ENCODE measurements at regions of chr7 and their contacts with region 1.

Region 1: DNA sequence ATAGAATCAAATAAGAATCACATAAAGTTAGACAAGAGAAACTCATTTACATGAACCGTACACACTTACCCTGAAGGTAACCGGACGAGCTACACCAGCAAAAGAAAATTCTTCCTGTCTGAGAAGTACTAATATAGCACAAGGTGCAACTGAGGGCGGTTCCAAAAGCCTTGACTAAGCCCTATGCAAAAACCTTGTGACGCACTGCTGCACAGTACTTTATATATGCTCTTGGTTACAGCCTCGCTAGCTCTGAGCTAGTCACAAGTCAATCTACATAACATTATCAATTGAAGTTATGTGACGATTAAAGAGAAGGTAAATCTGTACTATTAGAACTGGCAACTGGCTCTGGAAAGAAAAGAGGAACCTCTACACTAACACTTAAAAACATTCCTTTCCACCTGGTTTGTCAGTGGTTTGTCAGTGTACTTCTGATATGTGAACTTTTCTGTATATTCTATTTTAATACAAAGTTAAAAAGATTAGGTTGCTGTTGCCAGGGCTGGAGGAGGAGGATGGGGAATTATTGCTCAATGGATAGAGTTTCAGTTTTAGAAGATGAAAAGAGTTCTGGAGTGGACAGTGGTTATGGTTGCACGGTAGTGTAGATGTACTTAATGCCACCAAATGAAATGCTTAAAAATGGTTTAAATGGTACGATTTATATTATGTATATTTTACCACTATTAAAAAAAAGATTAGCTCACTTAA is 21.6 kb downstream of the NT5C3A start:
- DNase-seq: peak in 2 of 4 experiments; percentile 35 to 68
- ATAC-seq: peak; percentile 85
- H3K4me3 ChIP-seq: no peak overlapping the region
- H3K27ac ChIP-seq: peak overlapping the region; percentile 7; the same call in 1 of the 3 replicates
- H3K4me1 ChIP-seq: peaks cover 8 to 20% of the 10 kb centered on the region in 2 experiments; a peak in 3 of 5 replicates
- H3K27me3 ChIP-seq: no peaks in the 10 kb centered on the region
- CTCF ChIP-seq: no peak
- EP300 ChIP-seq: no peak
- POLR2A ChIP-seq: no peak
- RAD21 ChIP-seq: no peak

Region 2: GRCh38 chr7:32694182-32694581 is 346.8 kb before region 1 on chr7:
- CTCF ChIA-PET with region 1: no interaction called
- POLR2A ChIA-PET with region 1: no interaction called
- in situ Hi-C with region 1: loop called (anchors 10 kb)
- intact Hi-C with region 1: no loop called
- DNase-seq: no peak
- ATAC-seq: no peak
- H3K4me3 ChIP-seq: no peak overlapping the region
- H3K27ac ChIP-seq: no peak overlapping the region
- H3K4me1 ChIP-seq: peaks cover 0 to 6% of the 10 kb centered on the region in 2 experiments; a peak in 1 of 5 replicates
- H3K27me3 ChIP-seq: no peaks in the 10 kb centered on the region
- CTCF ChIP-seq: no peak
- EP300 ChIP-seq: no peak
- POLR2A ChIP-seq: no peak
- RAD21 ChIP-seq: no peak

Measured in K562 (cell line).